ENCODE measurements at regions of chr17 and their contacts with region 1.

Region 1: DNA sequence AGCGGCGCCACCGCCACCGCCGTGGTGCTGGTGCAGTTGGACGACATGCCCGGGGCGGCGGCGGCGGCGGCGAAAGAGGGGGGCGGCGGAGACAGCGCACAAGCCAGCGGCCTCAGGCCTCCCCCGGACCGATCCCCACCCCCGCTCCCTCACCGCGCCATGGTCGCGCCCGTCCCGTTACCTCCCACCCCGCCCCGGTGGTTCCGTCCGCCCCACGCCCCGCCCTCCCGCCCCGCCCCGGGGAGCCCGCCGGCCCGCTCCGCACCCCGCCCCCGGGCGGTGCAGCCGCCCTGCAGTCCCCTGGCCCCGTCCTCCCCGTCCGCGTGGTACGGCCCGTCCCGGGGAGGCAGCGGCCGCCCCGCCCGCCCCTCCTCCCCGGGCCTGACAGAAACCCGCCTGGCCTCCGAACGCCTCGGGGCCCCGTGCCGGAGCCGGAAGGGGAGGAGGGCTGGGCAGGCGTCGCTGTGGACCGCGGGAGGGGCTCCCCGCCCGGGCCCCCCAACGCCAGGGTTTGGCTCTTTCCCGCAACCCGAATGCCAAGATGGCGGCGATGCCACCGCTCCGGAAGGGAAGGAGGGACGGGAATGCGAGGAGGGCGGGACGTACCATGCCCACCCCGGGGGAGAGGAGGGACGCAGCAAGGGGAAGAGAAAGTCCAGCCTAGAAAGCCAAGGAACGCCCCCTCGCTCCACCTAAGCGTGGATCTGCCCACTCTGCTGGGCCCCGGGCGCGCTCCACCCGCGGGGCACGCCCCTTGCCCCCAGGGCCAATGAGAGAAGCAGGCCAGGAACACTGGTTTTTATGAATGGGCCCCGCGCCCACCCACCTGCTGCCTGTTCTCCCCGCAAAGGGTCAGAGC is at the start of gene PIP4K2B:
- DNase-seq: peak; percentile 86
- ATAC-seq: peak; percentile 85
- H3K4me3 Mint-ChIP-seq: peak within 1 kb of the TSS; percentile 88
- H3K27ac Mint-ChIP-seq: peak within 1 kb of the TSS; percentile 87
- H3K4me1 Mint-ChIP-seq: peaks cover 32% of the 10 kb centered on the region
- H3K27me3 Mint-ChIP-seq: no peaks in the 10 kb centered on the region
- CTCF ChIP-seq: no peak
- total RNA-seq, gene PIP4K2B: 32.1 and 33.0 TPM in 2 replicates

Region 2: GRCh38 chr17:38789185-38789584 is 10.4 kb before region 1 on chr17:
- CTCF ChIA-PET with region 1: no interaction called
- POLR2A ChIA-PET with region 1: no interaction called
- intact Hi-C with region 1: loop called (anchors 1 kb)
- DNase-seq: no peak
- ATAC-seq: no peak
- H3K4me3 Mint-ChIP-seq: no peak overlapping the region
- H3K27ac Mint-ChIP-seq: no peak overlapping the region
- H3K4me1 Mint-ChIP-seq: peaks cover 9% of the 10 kb centered on the region
- H3K27me3 Mint-ChIP-seq: no peaks in the 10 kb centered on the region
- CTCF ChIP-seq: no peak

Region 3: GRCh38 chr17:38824899-38825761 is 25.5 kb after region 1 on chr17 and contains the start of gene CWC25:
- CTCF ChIA-PET with region 1: no interaction called
- POLR2A ChIA-PET with region 1: interaction called, 11 read pairs
- intact Hi-C with region 1: loop called (anchors 1 kb)
- DNase-seq: peak; percentile 99
- ATAC-seq: peak; percentile 80
- H3K4me3 Mint-ChIP-seq: peak within 1 kb of the TSS; percentile 98
- H3K27ac Mint-ChIP-seq: peak within 1 kb of the TSS; percentile 99
- H3K4me1 Mint-ChIP-seq: peaks cover 29% of the 10 kb centered on the region
- H3K27me3 Mint-ChIP-seq: peaks cover 3% of the 10 kb centered on the region
- CTCF ChIP-seq: no peak
- total RNA-seq, gene CWC25: 35.6 and 38.3 TPM in 2 replicates

Measured in activated B cell treated with CpG ODN at 0.5 μM for 24 hours (primary cell).